Panc1 (cell line): ENCODE measurements at regions of chr2 and their contacts with region 1.

Region 1: GRCh38 chr2:146579147-146579930 is 1265.5 kb upstream of the ACVR2A start:
- DNase-seq: no peak
- ATAC-seq: no peak
- H3K4me3 ChIP-seq: no peak overlapping the region
- H3K27ac ChIP-seq: no peak overlapping the region
- H3K4me1 ChIP-seq: no peaks in the 10 kb centered on the region; the same call in 1 of the 2 replicates
- H3K27me3 ChIP-seq: no peaks in the 10 kb centered on the region
- CTCF ChIP-seq: no peak

Region 2: DNA sequence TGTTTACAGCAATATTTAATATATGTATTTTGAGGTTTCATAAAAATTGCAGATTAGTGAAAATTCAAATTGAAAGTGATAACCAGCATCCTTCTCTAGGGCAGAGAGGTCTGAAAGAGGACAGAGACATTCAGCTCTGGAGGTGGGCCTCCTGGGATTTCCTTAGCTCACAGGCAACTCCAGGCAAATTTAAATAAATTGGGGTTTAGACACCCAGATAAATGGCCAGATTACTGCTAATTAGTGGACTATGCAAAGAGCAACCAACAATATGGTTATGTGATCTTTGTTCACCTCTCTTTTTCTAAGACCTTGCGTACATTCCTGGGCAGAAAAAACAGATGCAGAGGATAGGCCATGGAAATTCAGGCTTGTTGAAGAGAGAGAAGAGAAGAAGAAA is 17.3 kb before region 1 on chr2:
- CTCF ChIA-PET with region 1: no interaction called
- POLR2A ChIA-PET with region 1: no interaction called
- in situ Hi-C with region 1: no loop called
- intact Hi-C with region 1: loop called (anchors 1 kb)
- DNase-seq: no peak
- ATAC-seq: no peak
- H3K4me3 ChIP-seq: no peak overlapping the region
- H3K27ac ChIP-seq: no peak overlapping the region
- H3K4me1 ChIP-seq: no peaks in the 10 kb centered on the region
- H3K27me3 ChIP-seq: no peaks in the 10 kb centered on the region
- CTCF ChIP-seq: no peak

Region 3: GRCh38 chr2:146786396-146786795 is 207.1 kb after region 1 on chr2:
- CTCF ChIA-PET with region 1: no interaction called
- POLR2A ChIA-PET with region 1: no interaction called
- in situ Hi-C with region 1: no loop called
- intact Hi-C with region 1: no loop called
- DNase-seq: no peak
- ATAC-seq: no peak
- H3K4me3 ChIP-seq: no peak overlapping the region
- H3K27ac ChIP-seq: no peak overlapping the region
- H3K4me1 ChIP-seq: no peaks in the 10 kb centered on the region
- H3K27me3 ChIP-seq: no peaks in the 10 kb centered on the region
- CTCF ChIP-seq: no peak